WTC11 (cell line): ENCODE measurements at regions of chr15 and their contacts with region 1.

Region 1: GRCh38 chr15:74202452-74203428 is at the start of gene STRA6:
- DNase-seq: peak; percentile 93
- ATAC-seq: peak; percentile 91
- H3K4me3 Mint-ChIP-seq: peak within 1 kb of the TSS; percentile 80
- H3K27ac Mint-ChIP-seq: peak within 1 kb of the TSS; percentile 97
- H3K4me1 Mint-ChIP-seq: peaks cover 67% of the 10 kb centered on the region
- H3K27me3 Mint-ChIP-seq: peaks cover 17% of the 10 kb centered on the region
- CTCF ChIP-seq: no peak
- total RNA-seq, gene STRA6: 20.1 to 23.2 TPM (median 21.7 TPM) in 3 replicates

Region 2: DNA sequence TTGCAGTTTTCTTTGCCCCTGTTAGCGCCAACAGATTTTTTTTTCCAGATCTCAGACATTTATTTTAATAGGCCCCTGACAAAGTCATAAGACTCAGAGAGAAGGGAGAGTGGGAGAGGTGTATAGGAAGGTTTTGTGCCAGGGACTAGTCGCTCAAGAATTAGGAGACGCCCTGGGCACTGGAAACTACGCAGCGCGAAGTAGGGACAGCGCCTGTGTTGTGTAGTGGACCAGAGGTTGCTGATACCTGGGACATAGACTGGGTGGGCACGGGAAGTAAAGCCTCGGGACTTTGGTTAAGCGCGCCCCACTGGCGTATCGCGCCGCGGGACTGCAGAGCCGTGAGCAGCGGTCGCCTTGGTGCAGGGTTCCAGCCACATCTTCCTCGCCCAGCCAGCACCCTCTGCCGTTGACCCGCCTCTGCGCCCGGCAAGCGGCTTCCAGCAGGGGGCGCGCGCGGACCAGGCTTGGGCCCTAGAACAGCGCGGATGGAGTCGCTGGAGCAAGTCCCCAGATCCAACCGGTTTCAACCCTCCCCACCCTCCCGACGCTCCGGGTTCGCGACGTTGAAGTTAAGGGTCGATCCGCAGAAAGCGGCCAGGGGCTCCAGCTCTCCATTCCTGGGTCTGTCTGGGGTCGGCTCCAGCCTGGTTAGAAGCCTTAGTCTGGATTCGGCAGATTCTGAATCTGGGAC is 75.3 kb before region 1 on chr15:
- CTCF ChIA-PET with region 1: interaction called, 21 read pairs
- POLR2A ChIA-PET with region 1: interaction called, 4 read pairs
- DNase-seq: peak; percentile 98
- ATAC-seq: peak; percentile 69
- H3K4me3 Mint-ChIP-seq: peak overlapping the region; percentile 73
- H3K27ac Mint-ChIP-seq: no peak overlapping the region
- H3K4me1 Mint-ChIP-seq: peaks cover 60% of the 10 kb centered on the region
- H3K27me3 Mint-ChIP-seq: peaks cover 76% of the 10 kb centered on the region
- CTCF ChIP-seq: peak; percentile 99

Region 3: DNA sequence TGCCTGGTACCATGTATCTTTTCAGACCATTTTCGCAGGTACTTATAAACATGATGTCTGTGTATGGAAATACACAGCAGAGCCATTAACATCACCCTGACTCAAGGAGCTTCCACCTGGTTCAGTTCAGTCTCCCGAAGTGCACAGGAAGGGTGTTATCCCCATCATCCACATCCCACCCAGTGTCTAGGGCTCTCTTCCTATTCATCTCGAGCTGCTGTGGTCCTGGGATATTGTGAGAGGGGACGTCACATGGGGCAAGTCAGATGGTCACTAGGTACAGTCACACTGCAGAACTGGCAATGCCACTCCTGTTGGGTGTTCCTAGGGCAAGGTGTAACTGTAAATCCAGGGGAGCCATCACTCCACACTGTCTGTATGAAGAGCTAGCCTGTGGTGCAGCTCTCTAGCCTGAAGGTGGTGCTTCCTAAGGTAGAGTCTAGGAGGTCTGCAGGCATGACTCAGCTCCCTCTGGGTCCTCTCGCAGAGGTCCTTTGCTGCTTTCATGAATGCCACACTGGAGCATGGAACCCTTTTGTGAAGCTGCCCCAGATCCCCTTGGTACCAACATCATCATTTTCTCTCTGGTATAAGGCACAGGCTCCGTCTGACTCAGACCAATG is 58.5 kb before region 1 on chr15:
- CTCF ChIA-PET with region 1: interaction called, 22 read pairs
- POLR2A ChIA-PET with region 1: no interaction called
- DNase-seq: no peak
- ATAC-seq: peak; percentile 92
- H3K4me3 Mint-ChIP-seq: no peak overlapping the region
- H3K27ac Mint-ChIP-seq: no peak overlapping the region
- H3K4me1 Mint-ChIP-seq: peaks cover 29% of the 10 kb centered on the region
- H3K27me3 Mint-ChIP-seq: peaks cover 10% of the 10 kb centered on the region
- CTCF ChIP-seq: no peak

Region 4: DNA sequence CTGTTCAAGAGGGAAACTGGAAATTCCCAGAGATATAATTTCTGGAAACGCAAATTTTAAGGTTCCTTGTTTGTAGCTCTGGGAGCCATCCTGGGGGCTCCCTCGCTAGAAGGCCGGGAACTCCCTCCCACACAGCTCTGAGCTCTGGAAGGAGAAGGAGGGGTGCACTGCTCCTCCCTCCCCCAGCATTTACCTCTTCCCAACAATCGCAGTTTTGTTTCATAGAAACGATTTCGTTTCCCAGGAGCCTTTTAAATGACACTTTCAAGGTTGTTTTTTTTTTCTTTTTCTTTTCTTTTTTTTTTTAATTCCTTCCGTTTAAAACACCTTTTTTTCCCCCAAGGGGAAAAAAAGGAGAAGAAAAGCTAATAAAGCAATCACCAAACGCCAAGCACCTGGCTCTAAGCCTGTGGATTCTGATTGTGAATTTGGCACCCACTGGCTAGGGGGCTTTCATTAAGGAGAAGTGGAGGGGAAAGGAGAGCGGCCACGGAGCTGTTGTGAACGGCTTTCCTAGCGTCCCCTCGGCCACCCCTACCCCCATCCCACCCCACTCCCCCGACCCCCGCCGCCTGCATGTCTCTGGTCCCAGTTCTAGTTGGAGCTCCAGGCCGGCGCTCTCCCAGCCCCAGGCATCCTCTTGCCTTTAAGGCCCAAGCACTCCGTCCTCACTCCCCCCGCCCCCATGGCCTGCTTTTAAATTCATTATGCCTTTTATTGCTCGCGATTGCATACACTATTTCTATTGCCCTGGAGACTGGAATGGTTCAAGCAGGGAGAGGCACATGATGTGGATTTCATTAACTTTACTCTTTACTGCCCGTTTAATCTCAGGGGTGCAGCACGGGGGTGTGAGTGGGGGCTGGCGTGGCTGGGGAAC is 19.7 kb after region 1 on chr15:
- CTCF ChIA-PET with region 1: interaction called, 36 read pairs
- POLR2A ChIA-PET with region 1: no interaction called
- DNase-seq: no peak
- ATAC-seq: no peak
- H3K4me3 Mint-ChIP-seq: peak overlapping the region; percentile 49
- H3K27ac Mint-ChIP-seq: no peak overlapping the region
- H3K4me1 Mint-ChIP-seq: peaks cover 54% of the 10 kb centered on the region
- H3K27me3 Mint-ChIP-seq: peaks cover 90% of the 10 kb centered on the region
- CTCF ChIP-seq: no peak

Region 5: DNA sequence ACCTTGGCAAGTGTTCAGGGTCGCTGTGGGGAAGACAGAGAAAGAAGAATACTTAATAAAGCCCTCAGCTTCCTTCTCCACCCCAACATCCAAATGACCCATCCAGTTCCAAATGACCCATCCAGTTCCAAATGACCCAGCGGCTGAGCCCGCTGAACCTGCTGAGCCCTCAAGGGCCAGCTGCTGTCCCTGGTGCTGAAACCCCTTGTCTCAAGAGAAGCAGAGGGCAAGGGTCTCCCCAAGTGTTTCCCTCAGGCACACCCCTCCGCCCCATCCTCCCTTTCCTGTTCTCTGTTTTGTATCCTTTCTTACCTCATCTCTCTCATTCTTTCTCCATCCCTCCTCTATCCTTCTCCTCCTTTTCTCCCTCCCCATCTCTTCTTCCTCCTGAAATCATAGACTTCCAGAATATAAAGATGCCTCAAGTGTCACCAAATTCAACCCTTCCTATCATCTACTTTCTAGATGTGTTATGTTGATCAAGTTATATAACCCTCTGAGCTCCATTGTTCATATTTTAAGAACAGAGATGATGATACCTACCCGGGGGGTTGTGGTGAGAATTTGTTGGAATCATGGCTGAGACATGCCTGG is 62.4 kb after region 1 on chr15:
- CTCF ChIA-PET with region 1: interaction called, 13 read pairs
- POLR2A ChIA-PET with region 1: interaction called, 3 read pairs
- DNase-seq: peak; percentile 86
- ATAC-seq: peak; percentile 65
- H3K4me3 Mint-ChIP-seq: no peak overlapping the region
- H3K27ac Mint-ChIP-seq: no peak overlapping the region
- H3K4me1 Mint-ChIP-seq: peaks cover 17% of the 10 kb centered on the region
- H3K27me3 Mint-ChIP-seq: peaks cover 4% of the 10 kb centered on the region; the same call in 1 of the 2 replicates
- CTCF ChIP-seq: no peak

Region 6: GRCh38 chr15:74396445-74397238 is 193.9 kb after region 1 on chr15:
- CTCF ChIA-PET with region 1: no interaction called
- POLR2A ChIA-PET with region 1: no interaction called
- DNase-seq: no peak
- ATAC-seq: peak; percentile 13
- H3K4me3 Mint-ChIP-seq: no peak overlapping the region
- H3K27ac Mint-ChIP-seq: no peak overlapping the region
- H3K4me1 Mint-ChIP-seq: peaks cover 16% of the 10 kb centered on the region
- H3K27me3 Mint-ChIP-seq: peaks cover 5% of the 10 kb centered on the region; the same call in 1 of the 2 replicates
- CTCF ChIP-seq: no peak